Naive thymus-derived CD8-positive, alpha-beta T cell (primary cell): ENCODE measurements at regions of chr19 and their contacts with region 1.

Region 1: DNA sequence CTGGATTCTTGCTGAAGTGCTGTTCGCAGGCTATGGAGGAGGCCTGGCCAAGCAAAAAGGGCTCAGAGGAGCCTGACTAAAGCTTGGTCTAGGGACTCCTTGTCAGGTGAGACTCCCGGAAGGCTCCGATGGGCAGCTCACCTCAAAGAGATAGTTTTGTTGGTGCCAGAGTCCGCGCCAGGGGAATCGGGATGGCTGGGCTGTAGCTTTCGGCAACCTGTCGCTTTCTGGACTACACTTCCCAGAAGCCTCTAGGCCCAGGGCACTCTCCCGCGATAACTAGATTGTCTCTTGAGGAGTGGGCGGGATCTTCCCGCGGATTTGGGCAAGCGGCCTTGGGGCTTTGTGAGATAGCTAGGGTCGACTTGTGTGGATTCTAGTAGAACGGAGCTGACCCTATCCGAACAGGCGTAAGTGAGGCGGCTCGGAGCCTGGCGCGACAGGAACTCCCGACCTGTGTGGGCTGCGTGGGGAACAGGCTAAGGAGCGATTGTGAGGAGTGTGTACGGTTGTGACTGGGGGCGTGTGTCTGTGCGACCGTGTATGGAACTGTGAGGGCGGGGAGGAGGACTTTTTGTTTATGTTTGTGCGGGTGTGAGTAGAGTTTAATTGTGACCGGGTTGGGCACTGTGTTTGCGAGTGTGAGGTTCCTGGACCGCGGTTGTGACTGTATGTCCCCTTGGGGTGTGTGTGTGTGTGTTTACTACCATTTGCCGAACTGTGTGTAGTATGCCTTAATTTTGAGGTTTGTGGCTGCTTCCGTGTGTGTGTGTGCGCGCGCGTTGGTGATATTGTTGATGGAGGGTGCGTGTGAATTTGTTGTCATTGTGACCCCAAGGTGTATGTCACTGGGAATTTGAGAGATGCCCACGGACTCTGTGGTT is at the start of gene ZNF345:
- DNase-seq: peak; percentile 68 to 95 (median 86)
- ATAC-seq: peak; percentile 85 to 87
- H3K4me3 Mint-ChIP-seq: no peak within 1 kb of the TSS
- H3K27ac Mint-ChIP-seq: peak within 1 kb of the TSS in 1 of 10 donors; percentile 43
- H3K4me1 Mint-ChIP-seq: peaks cover 3 to 20% (median 9%) of the 10 kb centered on the region in 4 donors
- H3K27me3 Mint-ChIP-seq: no peaks in the 10 kb centered on the region
- polyA plus RNA-seq, gene ZNF345: 5.1 to 10.0 (median 6.8) TPM

Region 2: DNA sequence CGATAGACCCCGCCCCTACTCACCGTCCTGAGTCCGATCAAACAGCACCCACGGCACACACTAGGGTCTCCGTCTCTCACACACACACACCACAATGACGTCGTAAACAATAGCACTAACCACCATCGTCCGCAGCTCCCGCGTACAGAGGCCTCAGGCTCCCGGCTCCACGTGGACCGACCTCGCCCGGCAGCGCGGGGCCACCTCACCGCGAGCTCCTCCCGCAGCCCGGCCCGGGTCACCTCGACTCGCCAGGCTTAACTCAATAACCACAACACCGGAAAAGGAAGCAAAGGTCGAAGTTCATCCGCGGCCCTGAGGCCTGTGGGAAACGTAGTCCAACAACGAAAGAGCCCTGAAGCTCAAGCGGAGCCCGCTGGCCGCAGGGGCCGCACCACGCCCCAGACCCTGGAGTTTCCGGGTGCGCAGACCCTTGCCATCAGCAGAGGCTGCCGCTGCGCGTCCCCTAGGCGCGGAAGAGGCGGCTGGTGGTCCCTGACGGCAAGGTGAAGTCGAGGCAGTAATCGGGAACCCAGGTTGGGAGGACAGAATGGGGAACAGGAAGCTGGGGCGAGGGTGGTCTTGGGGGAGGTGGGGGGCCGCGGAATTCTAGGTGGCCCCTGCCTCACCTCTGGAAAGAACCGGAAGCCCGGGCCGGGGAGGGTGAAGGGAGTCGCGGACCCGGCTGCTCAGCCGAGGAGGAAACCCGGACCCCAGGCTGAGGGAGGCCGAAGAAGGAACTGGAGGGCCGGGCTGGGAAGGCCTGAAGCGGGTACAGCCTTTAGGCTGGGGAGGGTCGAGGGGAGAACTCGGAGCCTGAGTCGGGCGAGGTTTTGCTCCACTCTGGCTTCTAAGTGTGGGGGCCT is 277.5 kb before region 1 on chr19 and contains the start of gene ZNF529:
- POLR2A ChIA-PET with region 1: interaction called, 10 read pairs
- DNase-seq: peak; percentile 65 to 93 (median 88)
- ATAC-seq: peak; percentile 84 to 93
- H3K4me3 Mint-ChIP-seq: peak within 1 kb of the TSS; percentile 83 to 100 (median 94)
- H3K27ac Mint-ChIP-seq: peak within 1 kb of the TSS; percentile 96 to 100 (median 97)
- H3K4me1 Mint-ChIP-seq: peaks cover 25 to 48% (median 41%) of the 10 kb centered on the region in 4 donors
- H3K27me3 Mint-ChIP-seq: no peaks in the 10 kb centered on the region
- polyA plus RNA-seq, gene ZNF529: 8.0 to 10.6 (median 9.9) TPM

Region 3: GRCh38 chr19:36605101-36605876 is 245.5 kb before region 1 on chr19 and contains the start of gene ZNF382:
- POLR2A ChIA-PET with region 1: interaction called, 24 read pairs
- DNase-seq: peak; percentile 71 to 93 (median 83)
- ATAC-seq: peak; percentile 78 to 84
- H3K4me3 Mint-ChIP-seq: peak within 1 kb of the TSS; percentile 88 to 99 (median 96)
- H3K27ac Mint-ChIP-seq: peak within 1 kb of the TSS; percentile 86 to 98 (median 96)
- H3K4me1 Mint-ChIP-seq: peaks cover 16 to 31% (median 30%) of the 10 kb centered on the region in 4 donors
- H3K27me3 Mint-ChIP-seq: no peaks in the 10 kb centered on the region
- polyA plus RNA-seq, gene ZNF382: 3.3 to 7.9 (median 7.1) TPM

Region 4: DNA sequence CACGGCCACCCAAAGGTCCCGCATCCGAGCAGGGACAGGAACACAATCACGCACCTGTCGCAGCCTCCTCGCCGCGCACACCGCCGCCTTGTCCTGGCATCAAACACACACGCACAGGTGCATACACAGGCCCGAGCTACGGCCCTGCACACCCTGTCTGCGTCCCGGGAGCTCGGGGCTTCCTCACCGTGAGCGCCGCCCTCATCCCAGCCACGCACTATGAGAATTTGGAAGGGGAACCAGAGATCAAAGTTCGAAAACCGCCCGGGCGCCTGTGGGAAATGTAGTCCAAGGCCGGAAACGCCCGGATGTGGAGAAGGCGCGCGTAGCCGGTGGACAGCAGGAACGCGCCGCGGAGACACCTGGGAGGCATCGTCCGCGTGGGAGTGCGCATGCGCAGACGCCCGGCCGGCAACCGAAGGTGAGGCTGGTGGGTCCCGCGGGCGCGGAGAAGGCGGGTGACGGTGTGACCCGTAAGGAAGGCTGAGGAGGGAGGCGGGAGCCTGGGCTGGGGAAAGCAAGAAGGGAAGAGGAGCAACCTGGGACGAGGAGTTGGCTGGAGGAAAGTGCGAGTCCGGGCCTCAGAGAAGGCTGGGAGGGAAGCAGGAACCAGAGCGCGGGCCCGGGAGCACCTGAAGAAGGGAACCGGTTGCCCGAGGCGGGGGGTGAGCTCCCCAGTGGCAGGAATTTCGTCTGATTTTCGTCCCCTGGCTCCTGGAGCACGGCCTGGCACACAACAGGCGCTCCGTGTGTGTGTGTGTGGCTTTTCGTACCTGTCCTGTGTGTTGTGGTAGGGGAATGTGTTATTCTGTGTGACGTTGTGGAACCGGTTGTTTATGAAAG is 163.4 kb before region 1 on chr19 and contains the start of gene ZNF567:
- POLR2A ChIA-PET with region 1: interaction called, 10 read pairs
- DNase-seq: peak; percentile 92 to 98 (median 95)
- ATAC-seq: peak; percentile 88 to 92
- H3K4me3 Mint-ChIP-seq: peak within 1 kb of the TSS; percentile 98 to 100 (median 99)
- H3K27ac Mint-ChIP-seq: peak within 1 kb of the TSS; percentile 94 to 98 (median 96)
- H3K4me1 Mint-ChIP-seq: peaks cover 24 to 46% (median 40%) of the 10 kb centered on the region in 4 donors
- H3K27me3 Mint-ChIP-seq: no peaks in the 10 kb centered on the region
- polyA plus RNA-seq, gene ZNF567: 6.3 to 11.0 (median 9.6) TPM

Region 5: GRCh38 chr19:36750066-36750691 is 100.6 kb before region 1 on chr19:
- POLR2A ChIA-PET with region 1: no interaction called
- DNase-seq: no peak
- ATAC-seq: no peak
- H3K4me3 Mint-ChIP-seq: no peak overlapping the region
- H3K27ac Mint-ChIP-seq: no peak overlapping the region
- H3K4me1 Mint-ChIP-seq: no peaks in the 10 kb centered on the region
- H3K27me3 Mint-ChIP-seq: no peaks in the 10 kb centered on the region

Region 6: GRCh38 chr19:36796076-36796992 is 54.5 kb before region 1 on chr19:
- POLR2A ChIA-PET with region 1: interaction called, 16 read pairs
- DNase-seq: no peak
- ATAC-seq: no peak
- H3K4me3 Mint-ChIP-seq: peak overlapping the region; percentile 95 to 100 (median 98)
- H3K27ac Mint-ChIP-seq: peak overlapping the region; percentile 92 to 100 (median 99)
- H3K4me1 Mint-ChIP-seq: peaks cover 4 to 20% (median 12%) of the 10 kb centered on the region in 4 donors
- H3K27me3 Mint-ChIP-seq: peaks cover 6 to 10% (median 8%) of the 10 kb centered on the region in 5 donors

Region 7: DNA sequence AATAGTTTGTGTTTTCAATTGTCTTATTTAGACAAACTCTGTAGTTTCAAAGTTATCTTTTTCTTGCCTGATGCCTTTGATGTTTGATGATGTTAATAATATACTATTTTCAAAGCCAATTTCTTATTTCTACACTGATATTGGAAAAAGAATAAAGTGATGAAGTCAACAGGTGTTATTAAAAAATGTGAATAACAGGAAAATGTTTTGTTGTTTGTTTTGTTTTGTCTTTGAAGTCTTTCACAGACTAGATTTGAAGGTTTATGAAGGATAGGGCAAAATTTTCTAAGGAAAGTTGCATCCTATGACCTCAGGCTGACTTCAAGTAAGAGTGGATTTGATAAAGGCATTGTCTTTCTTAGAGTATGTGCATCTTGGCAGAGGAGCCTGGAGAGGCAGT is 43.8 kb before region 1 on chr19:
- POLR2A ChIA-PET with region 1: no interaction called
- DNase-seq: no peak
- ATAC-seq: no peak
- H3K4me3 Mint-ChIP-seq: no peak overlapping the region
- H3K27ac Mint-ChIP-seq: no peak overlapping the region
- H3K4me1 Mint-ChIP-seq: no peaks in the 10 kb centered on the region
- H3K27me3 Mint-ChIP-seq: no peaks in the 10 kb centered on the region

Region 8: DNA sequence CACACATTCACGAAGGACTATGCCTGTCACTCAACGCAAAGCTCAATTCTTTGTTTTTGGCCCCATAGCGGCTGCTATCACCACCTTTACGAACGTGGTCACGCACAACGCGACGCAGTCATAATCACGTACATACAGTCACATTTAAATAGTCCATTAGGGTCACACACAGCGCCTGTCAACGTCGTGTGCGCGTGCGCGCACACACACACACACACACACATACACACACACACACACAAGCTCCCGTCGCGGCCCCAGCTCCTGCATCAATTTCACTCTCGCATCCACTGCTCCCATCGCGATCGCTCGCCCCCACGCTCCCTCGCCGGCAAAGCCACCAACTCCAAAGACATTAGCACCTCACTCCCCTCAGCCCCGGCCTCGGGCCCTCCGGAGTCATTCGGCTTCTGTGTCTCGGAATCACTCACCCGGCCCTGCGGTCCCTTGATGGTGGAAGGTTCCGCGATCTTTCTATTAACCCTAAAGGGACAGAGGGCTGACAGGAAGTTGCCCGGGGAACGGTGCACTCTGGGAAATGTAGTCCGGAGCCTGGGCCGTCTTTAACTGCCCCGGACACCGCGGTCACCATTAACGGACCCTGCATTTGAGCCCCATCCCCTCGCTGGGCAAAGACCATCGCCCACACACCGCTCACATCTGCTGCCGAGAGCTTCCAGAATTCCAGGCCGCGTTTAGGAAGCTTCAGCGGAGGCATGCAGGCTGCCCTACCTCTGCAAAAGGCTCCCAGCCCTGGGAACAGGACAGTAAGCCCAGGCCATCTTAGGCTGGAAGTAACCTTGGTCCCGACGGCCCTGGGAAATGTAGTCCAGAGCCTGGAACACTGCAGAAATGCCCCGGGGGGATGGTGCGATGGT is 12.7 kb before region 1 on chr19 and contains the start of gene ZNF790:
- POLR2A ChIA-PET with region 1: interaction called, 99 read pairs
- DNase-seq: peak; percentile 59 to 90 (median 84)
- ATAC-seq: peak; percentile 90 to 92
- H3K4me3 Mint-ChIP-seq: peak within 1 kb of the TSS in 1 of 10 donors; percentile 63
- H3K27ac Mint-ChIP-seq: peak within 1 kb of the TSS in 5 of 10 donors; percentile 44 to 92 (median 63)
- H3K4me1 Mint-ChIP-seq: peaks cover 3 to 15% (median 9%) of the 10 kb centered on the region in 4 donors
- H3K27me3 Mint-ChIP-seq: no peaks in the 10 kb centered on the region
- polyA plus RNA-seq, gene ZNF790: 5.1 to 6.6 (median 5.7) TPM